AG04450 (cell line): ENCODE measurements at regions of chr17 and their contacts with region 1.

Region 1: GRCh38 chr17:15502369-15503112 is 35.1 kb upstream of the CDRT4 start:
- DNase-seq: peak; percentile 83
- H3K4me3 ChIP-seq: no peak overlapping the region
- H3K27ac ChIP-seq: peak overlapping the region; percentile 61
- H3K27me3 ChIP-seq: no peaks in the 10 kb centered on the region
- CTCF ChIP-seq: peak; percentile 92

Region 2: DNA sequence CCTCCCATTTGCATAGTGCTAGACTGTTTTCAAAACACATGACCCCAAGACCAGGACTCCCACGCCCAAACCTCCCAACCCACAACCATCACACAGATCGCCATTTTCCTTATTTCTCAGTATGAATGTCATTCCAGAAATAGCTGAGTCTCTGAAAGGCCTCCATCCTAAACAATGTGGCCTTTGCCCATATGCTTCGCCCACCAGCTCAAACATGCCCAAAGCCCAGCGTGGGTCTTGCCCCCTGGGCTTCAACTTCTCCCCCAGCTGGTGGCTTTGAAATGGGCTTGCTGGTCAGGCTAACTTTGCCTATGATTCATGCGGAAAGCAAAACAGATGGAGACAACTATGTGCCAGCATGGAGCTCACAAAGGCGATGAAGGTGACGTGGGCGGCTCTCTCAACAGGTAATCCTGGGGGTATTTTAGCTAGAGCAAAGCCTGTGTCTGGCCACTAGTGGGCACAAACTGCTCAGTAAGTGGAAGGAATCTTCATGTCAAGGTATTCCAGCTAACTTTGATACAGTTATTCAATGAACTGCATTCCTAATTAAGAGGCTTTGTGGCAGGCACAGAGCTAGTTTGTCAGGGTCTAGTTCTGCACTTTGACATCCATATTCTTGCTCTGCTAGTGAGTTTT is 254.5 kb before region 1 on chr17:
- CTCF ChIA-PET with region 1: interaction called, 16 read pairs
- POLR2A ChIA-PET with region 1: no interaction called
- DNase-seq: no peak
- H3K4me3 ChIP-seq: no peak overlapping the region
- H3K27ac ChIP-seq: no peak overlapping the region
- H3K27me3 ChIP-seq: no peaks in the 10 kb centered on the region
- CTCF ChIP-seq: peak; percentile 44

Region 3: DNA sequence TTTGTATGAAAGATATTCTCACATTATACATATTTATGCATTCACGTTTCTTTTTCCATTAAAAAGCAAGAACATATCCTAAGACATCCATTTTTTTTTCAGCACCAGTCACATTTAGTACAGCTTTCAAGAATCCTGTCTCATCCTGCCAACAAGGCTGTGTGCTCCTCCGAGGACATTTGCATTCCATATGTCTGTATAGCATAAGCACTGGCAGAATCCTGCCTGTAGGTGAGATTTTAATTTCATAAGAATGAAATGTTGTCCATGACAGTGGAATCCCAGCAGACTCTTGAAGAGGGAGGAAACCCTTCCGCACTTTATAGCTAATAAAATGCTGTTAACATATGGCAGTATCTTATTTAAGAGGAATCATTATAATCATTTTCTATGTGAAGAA is 234.5 kb before region 1 on chr17:
- CTCF ChIA-PET with region 1: interaction called, 30 read pairs
- POLR2A ChIA-PET with region 1: interaction called, 13 read pairs
- DNase-seq: no peak
- H3K4me3 ChIP-seq: no peak overlapping the region
- H3K27ac ChIP-seq: no peak overlapping the region
- H3K27me3 ChIP-seq: peaks cover 7% of the 10 kb centered on the region
- CTCF ChIP-seq: peak; percentile 33

Region 4: DNA sequence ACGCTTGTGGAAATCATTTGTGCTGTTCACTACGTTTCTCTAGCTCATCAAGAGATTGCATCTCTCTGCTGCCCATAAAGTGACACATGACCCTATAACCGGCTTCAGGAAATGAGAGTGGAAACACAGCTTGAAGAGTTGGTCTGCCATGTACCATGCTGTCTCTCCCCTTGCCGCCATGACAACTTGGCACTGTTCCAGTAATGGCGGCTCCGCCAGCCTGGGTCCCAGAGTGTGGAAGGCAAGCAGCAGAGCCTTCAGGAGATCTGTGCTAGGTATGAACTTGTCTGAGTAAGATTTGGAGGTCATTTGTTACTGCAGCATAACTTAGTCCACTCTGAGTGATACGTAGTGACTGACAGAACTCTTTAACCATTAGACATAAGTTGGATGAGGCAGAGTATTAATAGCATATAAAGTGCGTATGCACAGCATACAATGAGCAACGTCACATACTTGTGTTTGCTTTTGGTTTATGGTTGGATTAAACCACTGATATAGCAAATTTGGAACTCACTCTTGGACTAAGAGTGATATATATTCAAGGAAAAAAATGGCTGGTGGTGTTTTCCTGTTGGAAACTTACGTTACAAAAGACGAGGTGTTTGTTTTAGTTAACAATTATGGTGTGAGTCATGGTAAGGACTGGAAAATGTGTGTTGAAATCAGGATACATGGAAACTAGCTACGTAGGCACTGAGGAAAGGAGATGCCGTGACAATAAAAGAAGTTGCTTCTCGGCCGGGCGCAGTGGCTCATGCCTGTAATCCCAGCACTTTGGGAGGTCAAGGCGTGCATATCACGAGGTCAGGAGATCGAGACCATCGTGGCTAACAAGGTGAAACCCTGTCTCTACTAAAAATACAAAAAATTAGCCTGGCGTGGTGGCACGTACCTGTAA is 213.0 kb before region 1 on chr17:
- CTCF ChIA-PET with region 1: no interaction called
- POLR2A ChIA-PET with region 1: no interaction called
- DNase-seq: no peak
- H3K4me3 ChIP-seq: no peak overlapping the region
- H3K27ac ChIP-seq: peak overlapping the region; percentile 33
- H3K27me3 ChIP-seq: no peaks in the 10 kb centered on the region
- CTCF ChIP-seq: no peak

Region 5: GRCh38 chr17:15361151-15361550 is 141.4 kb before region 1 on chr17:
- CTCF ChIA-PET with region 1: no interaction called
- POLR2A ChIA-PET with region 1: no interaction called
- DNase-seq: no peak
- H3K4me3 ChIP-seq: no peak overlapping the region
- H3K27ac ChIP-seq: no peak overlapping the region
- H3K27me3 ChIP-seq: peaks cover 2% of the 10 kb centered on the region
- CTCF ChIP-seq: no peak

Region 6: GRCh38 chr17:15436473-15437302 is 65.9 kb before region 1 on chr17:
- CTCF ChIA-PET with region 1: interaction called, 14 read pairs
- POLR2A ChIA-PET with region 1: interaction called, 3 read pairs
- DNase-seq: peak; percentile 13
- H3K4me3 ChIP-seq: no peak overlapping the region
- H3K27ac ChIP-seq: peak overlapping the region; percentile 24
- H3K27me3 ChIP-seq: no peaks in the 10 kb centered on the region
- CTCF ChIP-seq: peak; percentile 51

Region 7: GRCh38 chr17:15475631-15476354 is 26.7 kb before region 1 on chr17:
- CTCF ChIA-PET with region 1: interaction called, 15 read pairs
- POLR2A ChIA-PET with region 1: no interaction called
- DNase-seq: no peak
- H3K4me3 ChIP-seq: no peak overlapping the region
- H3K27ac ChIP-seq: no peak overlapping the region
- H3K27me3 ChIP-seq: no peaks in the 10 kb centered on the region
- CTCF ChIP-seq: no peak